Activated B cell treated with CpG ODN at 0.5 μM for 24 hours (primary cell): ENCODE measurements at regions of chr3 and their contacts with region 1.

Region 1: DNA sequence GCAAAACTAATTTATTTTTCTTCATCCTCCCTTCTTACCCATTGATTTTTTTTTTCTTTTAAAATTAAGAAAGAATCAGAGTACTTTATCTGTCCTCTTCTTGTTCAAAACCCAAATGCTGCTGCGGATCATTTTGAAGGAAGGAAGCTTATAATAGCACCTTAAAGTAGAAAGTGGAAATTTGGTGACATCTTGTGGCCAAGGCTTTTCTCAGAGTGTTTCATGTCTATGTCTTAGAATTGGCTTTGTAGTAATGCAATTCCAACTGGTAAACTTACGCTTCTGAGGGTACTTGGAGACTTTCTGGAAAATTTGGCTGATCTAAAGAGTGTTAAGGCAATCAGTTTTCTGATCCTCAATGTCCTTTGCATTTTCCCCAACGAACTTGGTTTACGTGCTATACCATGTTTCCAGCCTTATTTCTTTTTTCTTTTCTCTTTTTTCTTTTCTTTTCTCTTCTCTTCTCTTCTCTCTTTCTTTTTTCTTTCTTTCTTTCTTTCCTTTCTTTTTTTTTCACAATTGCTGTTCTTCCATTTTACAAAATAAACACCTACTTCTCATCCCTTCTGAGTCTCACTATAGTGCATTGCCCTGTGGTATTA is 30.7 kb downstream of the C3orf38 start:
- DNase-seq: no peak
- ATAC-seq: no peak
- H3K4me3 Mint-ChIP-seq: no peak overlapping the region
- H3K27ac Mint-ChIP-seq: no peak overlapping the region
- H3K4me1 Mint-ChIP-seq: no peaks in the 10 kb centered on the region
- H3K27me3 Mint-ChIP-seq: no peaks in the 10 kb centered on the region
- CTCF ChIP-seq: no peak

Region 2: DNA sequence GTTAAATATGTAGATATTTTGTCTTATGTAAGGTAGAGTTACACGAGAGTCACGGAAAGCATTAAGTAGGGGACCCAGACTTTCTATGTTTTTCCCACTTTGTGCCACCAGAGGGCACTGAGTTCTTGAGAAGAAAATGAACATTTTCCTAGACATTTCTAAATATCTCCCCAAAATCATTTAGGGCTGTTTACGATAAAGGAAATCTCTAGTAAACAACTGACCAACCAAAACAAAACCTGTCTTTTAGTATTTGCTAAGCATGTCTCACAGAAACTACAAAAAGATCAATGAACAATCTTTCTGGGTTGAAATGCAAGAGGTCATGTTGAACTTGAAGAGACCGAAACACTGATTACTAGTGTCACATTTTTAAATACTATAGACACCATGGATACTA is 920.2 kb before region 1 on chr3:
- CTCF ChIA-PET with region 1: interaction called, 3 read pairs
- POLR2A ChIA-PET with region 1: no interaction called
- intact Hi-C with region 1: loop called (anchors 1 kb)
- DNase-seq: no peak
- ATAC-seq: peak; percentile 45
- H3K4me3 Mint-ChIP-seq: no peak overlapping the region
- H3K27ac Mint-ChIP-seq: no peak overlapping the region
- H3K4me1 Mint-ChIP-seq: peaks cover 4% of the 10 kb centered on the region
- H3K27me3 Mint-ChIP-seq: no peaks in the 10 kb centered on the region
- CTCF ChIP-seq: peak; percentile 24

Region 3: GRCh38 chr3:87298111-87298718 is 882.3 kb before region 1 on chr3:
- CTCF ChIA-PET with region 1: interaction called, 7 read pairs
- POLR2A ChIA-PET with region 1: no interaction called
- intact Hi-C with region 1: loop called (anchors 1 kb)
- DNase-seq: no peak
- ATAC-seq: peak; percentile 50
- H3K4me3 Mint-ChIP-seq: no peak overlapping the region
- H3K27ac Mint-ChIP-seq: no peak overlapping the region
- H3K4me1 Mint-ChIP-seq: no peaks in the 10 kb centered on the region
- H3K27me3 Mint-ChIP-seq: no peaks in the 10 kb centered on the region
- CTCF ChIP-seq: no peak

Region 4: GRCh38 chr3:87350364-87351199 is 829.9 kb before region 1 on chr3:
- CTCF ChIA-PET with region 1: interaction called, 20 read pairs
- POLR2A ChIA-PET with region 1: no interaction called
- intact Hi-C with region 1: loop called (anchors 1 kb)
- DNase-seq: no peak
- ATAC-seq: peak; percentile 75
- H3K4me3 Mint-ChIP-seq: no peak overlapping the region
- H3K27ac Mint-ChIP-seq: no peak overlapping the region
- H3K4me1 Mint-ChIP-seq: no peaks in the 10 kb centered on the region
- H3K27me3 Mint-ChIP-seq: peaks cover 4% of the 10 kb centered on the region
- CTCF ChIP-seq: peak; percentile 86

Region 5: GRCh38 chr3:87771341-87772192 is 408.9 kb before region 1 on chr3:
- CTCF ChIA-PET with region 1: interaction called, 3 read pairs
- POLR2A ChIA-PET with region 1: no interaction called
- intact Hi-C with region 1: loop called (anchors 1 kb)
- DNase-seq: no peak
- ATAC-seq: peak; percentile 75
- H3K4me3 Mint-ChIP-seq: no peak overlapping the region
- H3K27ac Mint-ChIP-seq: no peak overlapping the region
- H3K4me1 Mint-ChIP-seq: no peaks in the 10 kb centered on the region
- H3K27me3 Mint-ChIP-seq: peaks cover 11% of the 10 kb centered on the region
- CTCF ChIP-seq: no peak